ENCODE measurements at regions of chr10 and their contacts with region 1.

Region 1: GRCh38 chr10:47233631-47234030 is 66.4 kb upstream of the GDF10 start:
- DNase-seq: no peak
- H3K4me3 ChIP-seq: no peak overlapping the region
- H3K27ac ChIP-seq: no peak overlapping the region
- H3K4me1 ChIP-seq: no peaks in the 10 kb centered on the region
- H3K27me3 ChIP-seq: no peaks in the 10 kb centered on the region
- CTCF ChIP-seq: no peak
- POLR2A ChIP-seq: no peak

Region 2: GRCh38 chr10:46544989-46545791 is 688.4 kb before region 1 on chr10:
- intact Hi-C with region 1: no loop called
- DNase-seq: peak in 1 of 2 donors; percentile 7
- H3K4me3 ChIP-seq: no peak overlapping the region
- H3K27ac ChIP-seq: no peak overlapping the region
- H3K4me1 ChIP-seq: no peaks in the 10 kb centered on the region
- H3K27me3 ChIP-seq: peaks cover 0 to 3% of the 10 kb centered on the region in 2 donors
- CTCF ChIP-seq: peak in 1 of 4 experiments; percentile 7
- POLR2A ChIP-seq: no peak

Region 3: GRCh38 chr10:47277352-47278151 is 43.9 kb after region 1 on chr10:
- intact Hi-C with region 1: loop called (anchors 2 kb)
- DNase-seq: no peak
- H3K4me3 ChIP-seq: no peak overlapping the region
- H3K27ac ChIP-seq: no peak overlapping the region
- H3K4me1 ChIP-seq: no peaks in the 10 kb centered on the region
- H3K27me3 ChIP-seq: no peaks in the 10 kb centered on the region
- CTCF ChIP-seq: no peak
- POLR2A ChIP-seq: no peak

Region 4: DNA sequence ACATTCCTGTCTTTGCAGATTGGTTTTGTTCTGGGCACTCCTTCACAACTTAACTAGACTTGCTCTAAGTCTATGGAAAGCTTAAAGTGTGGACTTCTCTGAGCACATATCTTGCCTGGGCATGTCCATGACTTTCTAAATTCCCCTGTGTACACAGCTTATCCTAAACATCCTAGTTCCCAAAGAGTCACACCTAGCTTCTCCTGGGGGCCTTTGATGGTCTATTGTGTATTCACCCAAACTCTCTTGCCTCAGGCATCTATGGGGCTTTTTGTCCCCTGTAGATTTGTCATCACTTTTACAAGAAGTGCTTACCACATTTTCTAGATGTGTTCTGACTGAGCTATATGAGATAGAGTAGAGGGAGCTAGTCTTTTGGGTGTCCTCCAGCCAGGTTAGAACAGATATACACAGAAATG is 162.7 kb after region 1 on chr10:
- intact Hi-C with region 1: no loop called
- DNase-seq: no peak
- H3K4me3 ChIP-seq: no peak overlapping the region
- H3K27ac ChIP-seq: no peak overlapping the region
- H3K4me1 ChIP-seq: no peaks in the 10 kb centered on the region
- H3K27me3 ChIP-seq: peaks cover 0 to 8% of the 10 kb centered on the region in 2 donors
- CTCF ChIP-seq: no peak
- POLR2A ChIP-seq: no peak